ENCODE measurements at regions of chr15 and their contacts with region 1.

Region 1: GRCh38 chr15:60507596-60508424 is 28.9 kb upstream of the ICE2 start:
- DNase-seq: peak; percentile 62
- H3K4me3 Mint-ChIP-seq: no peak overlapping the region
- H3K27ac Mint-ChIP-seq: no peak overlapping the region
- H3K4me1 Mint-ChIP-seq: peaks cover 12% of the 10 kb centered on the region
- H3K27me3 Mint-ChIP-seq: no peaks in the 10 kb centered on the region
- CTCF ChIP-seq: peak; percentile 67

Region 2: GRCh38 chr15:60520825-60521368 is 13.1 kb after region 1 on chr15:
- CTCF ChIA-PET with region 1: interaction called, 18 read pairs
- intact Hi-C with region 1: loop called (anchors 1 kb)
- DNase-seq: peak; percentile 82
- H3K4me3 Mint-ChIP-seq: peak overlapping the region; percentile 8
- H3K27ac Mint-ChIP-seq: peak overlapping the region; percentile 73
- H3K4me1 Mint-ChIP-seq: peaks cover 19% of the 10 kb centered on the region
- H3K27me3 Mint-ChIP-seq: no peaks in the 10 kb centered on the region
- CTCF ChIP-seq: peak; percentile 89

Region 3: DNA sequence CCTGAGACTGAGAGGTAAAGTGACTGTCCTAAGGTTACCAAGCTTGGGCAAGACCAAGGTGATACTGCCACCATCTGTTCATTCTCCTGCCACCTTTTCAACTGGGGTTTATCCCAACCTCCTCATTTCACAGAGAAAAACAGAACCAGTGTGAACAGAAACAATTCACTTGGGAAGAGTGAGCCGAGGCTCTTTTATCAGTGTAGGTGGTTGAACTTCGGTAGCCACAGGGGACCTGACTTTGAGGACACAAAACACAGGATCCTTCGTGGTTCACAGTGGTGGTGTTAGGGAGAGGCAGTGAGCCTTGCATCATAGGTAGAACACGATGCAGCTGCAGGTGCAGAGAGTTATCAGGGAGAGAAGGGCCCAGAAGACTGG is 44.0 kb after region 1 on chr15:
- CTCF ChIA-PET with region 1: interaction called, 11 read pairs
- intact Hi-C with region 1: loop called (anchors 1 kb)
- DNase-seq: peak; percentile 49
- H3K4me3 Mint-ChIP-seq: peak overlapping the region; percentile 31
- H3K27ac Mint-ChIP-seq: peak overlapping the region; percentile 23
- H3K4me1 Mint-ChIP-seq: peaks cover 22% of the 10 kb centered on the region
- H3K27me3 Mint-ChIP-seq: no peaks in the 10 kb centered on the region
- CTCF ChIP-seq: peak; percentile 25

Region 4: DNA sequence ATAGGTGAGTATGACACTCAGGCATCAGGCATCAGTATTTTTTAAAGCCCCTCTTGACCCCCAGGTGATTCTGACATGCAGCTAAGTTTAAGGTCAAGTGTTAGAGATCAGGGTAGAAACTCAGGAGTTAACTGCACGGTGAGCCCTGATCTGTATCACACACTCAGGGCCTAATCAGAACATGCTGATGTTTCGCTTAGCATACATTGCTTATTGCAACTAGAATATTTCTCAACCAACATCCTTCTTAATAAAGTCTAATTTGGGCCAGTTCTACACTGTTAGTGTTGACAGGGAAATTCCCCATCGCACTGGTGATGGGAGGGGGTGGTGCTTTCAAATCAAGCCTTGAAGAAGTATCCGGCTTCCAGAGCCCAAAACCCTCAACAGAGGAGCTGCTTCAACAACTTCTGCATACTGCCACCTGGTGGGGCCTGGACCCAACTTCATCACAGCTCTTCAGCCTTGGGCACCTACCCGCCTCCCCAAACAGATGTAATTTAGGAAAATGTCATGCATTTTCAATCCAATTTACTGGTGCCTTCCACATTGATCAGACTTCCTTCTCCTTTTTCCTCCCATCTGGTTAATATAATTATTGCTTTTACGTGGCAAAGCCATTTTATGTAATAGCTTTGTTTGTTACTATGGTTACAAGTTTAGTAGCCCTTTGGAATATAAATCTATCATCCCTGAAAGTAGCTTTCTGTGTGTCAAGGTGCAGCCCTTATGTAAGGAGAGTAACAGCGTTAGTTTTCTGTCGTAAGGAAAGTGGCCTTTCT is 409.1 kb after region 1 on chr15:
- CTCF ChIA-PET with region 1: interaction called, 4 read pairs
- intact Hi-C with region 1: loop called (anchors 5 kb)
- DNase-seq: peak; percentile 88
- H3K4me3 Mint-ChIP-seq: peak overlapping the region; percentile 37
- H3K27ac Mint-ChIP-seq: peak overlapping the region; percentile 88
- H3K4me1 Mint-ChIP-seq: peaks cover 34% of the 10 kb centered on the region
- H3K27me3 Mint-ChIP-seq: no peaks in the 10 kb centered on the region
- CTCF ChIP-seq: peak; percentile 84